Mammary epithelial cell (primary cell): ENCODE measurements at regions of chr22 and their contacts with region 1.

Region 1: DNA sequence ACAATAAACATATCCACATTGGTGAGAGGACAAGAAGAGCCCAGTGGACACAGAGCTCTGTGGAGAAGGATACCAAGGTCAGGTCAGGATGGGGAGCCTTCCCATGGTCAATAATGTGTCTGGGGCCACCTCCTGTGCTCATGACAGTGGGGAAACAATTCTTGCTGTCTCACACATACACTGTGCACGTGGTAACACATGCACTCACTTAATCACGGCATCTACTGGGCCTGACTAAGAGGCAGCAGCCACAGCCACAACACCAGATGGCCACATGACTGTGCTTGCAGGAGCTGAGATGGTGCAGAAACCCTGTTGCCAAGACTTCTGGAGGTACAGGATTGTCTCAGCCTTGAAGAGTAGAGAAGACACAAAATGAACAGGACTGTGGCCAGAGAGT is 28.6 kb downstream of the C22orf42 start:
- DNase-seq: peak; percentile 16
- H3K4me3 ChIP-seq: no peak overlapping the region
- H3K27ac ChIP-seq: no peak overlapping the region
- H3K4me1 ChIP-seq: peaks cover 3% of the 10 kb centered on the region
- H3K27me3 ChIP-seq: no peaks in the 10 kb centered on the region
- CTCF ChIP-seq: no peak

Region 2: DNA sequence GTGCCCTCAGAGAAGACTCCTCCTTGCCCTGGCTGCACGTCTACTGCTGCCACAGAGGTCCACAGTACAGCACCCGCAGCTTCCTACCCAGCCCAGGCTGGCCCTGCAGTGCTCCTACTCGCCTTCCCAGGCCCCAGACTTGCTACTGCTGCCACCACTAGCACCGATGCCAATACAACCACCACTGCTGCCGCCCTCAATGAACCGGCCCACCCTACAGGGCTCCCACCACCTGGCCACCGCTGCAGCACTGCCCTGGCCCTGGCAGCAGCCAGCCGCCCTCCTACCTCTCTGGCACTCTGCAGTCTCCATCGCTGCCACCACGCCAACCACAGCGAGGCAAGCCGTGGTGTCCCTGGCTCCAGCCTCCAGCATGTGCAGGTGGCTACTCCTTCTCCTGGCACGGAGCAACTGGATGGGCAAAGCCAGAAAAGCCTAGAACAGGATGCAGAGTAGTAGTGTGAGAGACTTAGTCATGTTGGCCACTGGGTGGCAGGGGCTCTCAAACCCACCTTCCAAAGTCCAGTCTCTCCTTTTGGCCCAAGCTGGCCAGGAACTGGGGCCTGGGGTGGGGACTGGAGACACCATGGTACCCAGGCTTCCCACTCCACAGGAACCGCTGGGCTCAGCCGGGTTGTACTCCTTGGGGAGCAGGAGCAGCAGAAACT is 10.8 kb before region 1 on chr22:
- CTCF ChIA-PET with region 1: no interaction called
- dilution Hi-C with region 1: no loop called
- in situ Hi-C with region 1: no loop called
- intact Hi-C with region 1: no loop called
- DNase-seq: no peak
- H3K4me3 ChIP-seq: no peak overlapping the region
- H3K27ac ChIP-seq: no peak overlapping the region
- H3K4me1 ChIP-seq: no peaks in the 10 kb centered on the region
- H3K27me3 ChIP-seq: peaks cover 3% of the 10 kb centered on the region
- CTCF ChIP-seq: no peak

Region 3: DNA sequence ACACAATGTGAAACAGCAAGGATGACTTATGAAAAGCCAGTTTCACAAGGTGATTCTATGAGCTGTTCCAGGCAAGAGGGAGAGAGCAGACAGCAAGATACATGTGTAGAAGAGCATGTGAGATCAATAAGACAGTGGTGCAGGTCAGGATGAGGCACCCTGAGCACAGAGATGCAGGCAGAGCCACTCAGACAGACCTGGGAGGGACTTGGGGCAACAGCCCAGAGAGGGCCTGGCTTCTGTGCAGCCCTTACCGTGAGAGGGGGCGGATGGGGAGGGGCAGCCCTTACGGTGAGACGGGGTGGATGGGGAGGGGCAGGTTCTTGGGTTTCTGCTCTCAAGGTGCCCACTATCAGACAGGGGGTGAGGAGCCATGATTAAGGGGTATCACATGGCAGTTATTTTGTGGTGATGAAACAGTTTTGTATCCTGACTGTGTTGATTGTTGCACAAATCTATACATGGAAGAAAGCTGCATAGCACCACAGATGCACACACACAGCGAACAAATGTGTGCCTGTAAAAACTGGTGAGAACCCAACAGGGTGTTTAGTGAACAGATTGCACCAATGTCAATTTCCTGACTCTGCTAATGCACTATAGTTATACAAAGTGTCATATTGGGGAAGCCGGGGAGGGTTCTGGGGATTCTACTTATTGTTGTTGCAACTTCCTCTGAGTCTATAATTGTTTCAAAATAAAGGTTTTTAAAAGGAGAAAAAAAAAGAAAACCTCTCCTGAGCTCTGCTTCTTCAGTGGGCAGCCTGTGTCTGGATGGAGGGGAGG is 33.8 kb after region 1 on chr22:
- CTCF ChIA-PET with region 1: no interaction called
- dilution Hi-C with region 1: no loop called
- in situ Hi-C with region 1: no loop called
- intact Hi-C with region 1: no loop called
- DNase-seq: no peak
- H3K4me3 ChIP-seq: no peak overlapping the region
- H3K27ac ChIP-seq: no peak overlapping the region
- H3K4me1 ChIP-seq: no peaks in the 10 kb centered on the region
- H3K27me3 ChIP-seq: no peaks in the 10 kb centered on the region
- CTCF ChIP-seq: no peak

Region 4: DNA sequence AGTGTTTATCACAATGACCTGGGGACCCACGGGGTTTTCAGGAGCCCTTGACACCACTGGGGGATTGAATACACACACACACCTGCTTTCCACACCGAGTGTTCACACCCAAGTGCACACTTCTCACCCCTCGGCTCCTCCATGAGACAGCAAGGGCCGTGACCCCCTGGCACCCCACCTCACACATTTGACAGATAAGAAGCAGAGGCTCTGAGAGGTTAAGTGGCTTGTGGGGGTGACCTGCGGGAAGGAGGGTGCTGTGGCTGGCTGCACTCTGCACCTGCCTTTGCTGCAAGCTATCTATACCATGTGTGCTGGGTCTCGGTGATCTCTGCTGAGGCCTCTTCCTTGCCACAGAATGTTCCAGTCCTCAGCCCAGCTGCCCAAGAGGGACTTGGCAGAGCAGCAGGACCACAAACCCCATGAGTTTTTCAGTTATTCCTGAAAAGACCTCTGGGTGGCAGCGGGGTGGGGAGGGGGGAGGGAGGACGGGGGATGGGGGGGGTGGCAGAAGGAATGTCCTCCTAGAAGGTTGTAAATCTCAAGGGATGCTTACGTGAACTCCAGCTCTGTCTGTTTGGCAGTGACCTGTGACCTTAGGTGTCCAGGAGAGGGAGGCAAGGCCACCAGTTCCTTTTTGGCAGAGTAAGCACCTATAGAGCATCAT is 179.3 kb after region 1 on chr22:
- CTCF ChIA-PET with region 1: interaction called, 18 read pairs
- dilution Hi-C with region 1: no loop called
- in situ Hi-C with region 1: no loop called
- intact Hi-C with region 1: no loop called
- DNase-seq: no peak
- H3K4me3 ChIP-seq: no peak overlapping the region
- H3K27ac ChIP-seq: no peak overlapping the region
- H3K4me1 ChIP-seq: no peaks in the 10 kb centered on the region
- H3K27me3 ChIP-seq: peaks cover 1% of the 10 kb centered on the region
- CTCF ChIP-seq: no peak